Gastrocnemius medialis (tissue), 4 donors: ENCODE measurements at regions of chr2 and their contacts with region 1.

Region 1: GRCh38 chr2:143034292-143035074 is 94.7 kb upstream of the ARHGAP15 start:
- DNase-seq: peak in 1 of 2 donors; percentile 17
- ATAC-seq: peak; percentile 83 to 89
- H3K4me3 ChIP-seq: no peak overlapping the region
- H3K27ac ChIP-seq: no peak overlapping the region
- H3K4me1 ChIP-seq: no peaks in the 10 kb centered on the region
- H3K27me3 ChIP-seq: no peaks in the 10 kb centered on the region
- CTCF ChIP-seq: peak; percentile 57 to 91 (median 81)
- POLR2A ChIP-seq: no peak

Region 2: GRCh38 chr2:143259368-143259958 is 225.0 kb after region 1 on chr2:
- in situ Hi-C with region 1: no loop called
- intact Hi-C with region 1: loop called (anchors 5 kb)
- DNase-seq: peak; percentile 6 to 27
- ATAC-seq: peak in 1 of 2 donors; percentile 63
- H3K4me3 ChIP-seq: no peak overlapping the region
- H3K27ac ChIP-seq: no peak overlapping the region
- H3K4me1 ChIP-seq: no peaks in the 10 kb centered on the region
- H3K27me3 ChIP-seq: no peaks in the 10 kb centered on the region
- CTCF ChIP-seq: peak in 4 of 5 experiments; percentile 36 to 58 (median 44)
- POLR2A ChIP-seq: no peak